Activated CD4-positive, alpha-beta memory T cell treated with anti-CD3 and anti-CD28 coated beads for 36 hours (primary cell): ENCODE measurements at regions of chr6 and their contacts with region 1.

Region 1: DNA sequence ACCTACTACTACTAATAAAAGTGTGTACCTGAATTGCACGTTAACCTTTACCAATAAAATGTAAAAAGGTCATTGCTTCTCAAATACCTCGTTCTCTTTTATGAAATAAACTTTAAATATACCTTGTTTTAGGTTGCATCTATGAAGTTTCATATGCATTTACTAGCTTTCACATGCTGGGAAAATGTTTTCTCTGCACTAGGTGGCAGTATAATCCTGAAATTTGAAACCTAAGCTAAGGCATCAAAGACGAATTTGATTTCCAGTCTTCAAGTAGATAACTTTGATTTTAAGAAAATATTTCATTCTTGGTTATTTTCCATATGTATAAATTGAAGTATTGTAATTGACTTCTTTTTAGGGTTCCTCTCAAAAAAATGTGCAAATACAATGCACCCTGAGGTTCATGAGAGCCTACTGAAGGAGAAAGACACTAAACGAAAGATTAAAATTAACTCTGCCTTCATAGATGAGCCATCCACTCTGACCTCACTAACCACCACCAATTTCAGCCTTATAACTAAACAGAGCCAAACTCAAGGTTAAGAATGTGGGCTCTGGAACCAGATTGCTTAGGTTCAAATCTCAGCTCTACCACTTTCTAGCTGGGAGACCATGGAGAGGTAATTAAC is 7.3 kb upstream of the COL9A1 start:
- DNase-seq: no peak
- H3K4me3 Mint-ChIP-seq: no peak overlapping the region
- H3K27ac Mint-ChIP-seq: no peak overlapping the region
- H3K4me1 Mint-ChIP-seq: peaks cover 2% of the 10 kb centered on the region
- H3K27me3 Mint-ChIP-seq: peaks cover 15% of the 10 kb centered on the region

Region 2: GRCh38 chr6:70221025-70221714 is 89.0 kb before region 1 on chr6:
- CTCF ChIA-PET with region 1: interaction called, 22 read pairs
- POLR2A ChIA-PET with region 1: no interaction called
- intact Hi-C with region 1: loop called (anchors 5 kb)
- DNase-seq: no peak
- H3K4me3 Mint-ChIP-seq: no peak overlapping the region
- H3K27ac Mint-ChIP-seq: no peak overlapping the region
- H3K4me1 Mint-ChIP-seq: peaks cover 2% of the 10 kb centered on the region
- H3K27me3 Mint-ChIP-seq: peaks cover 9% of the 10 kb centered on the region

Region 3: GRCh38 chr6:70327036-70327435 is 16.9 kb after region 1 on chr6:
- CTCF ChIA-PET with region 1: interaction called, 11 read pairs
- POLR2A ChIA-PET with region 1: no interaction called
- intact Hi-C with region 1: no loop called
- DNase-seq: no peak
- H3K4me3 Mint-ChIP-seq: no peak overlapping the region
- H3K27ac Mint-ChIP-seq: no peak overlapping the region
- H3K4me1 Mint-ChIP-seq: no peaks in the 10 kb centered on the region
- H3K27me3 Mint-ChIP-seq: peaks cover 2% of the 10 kb centered on the region

Region 4: DNA sequence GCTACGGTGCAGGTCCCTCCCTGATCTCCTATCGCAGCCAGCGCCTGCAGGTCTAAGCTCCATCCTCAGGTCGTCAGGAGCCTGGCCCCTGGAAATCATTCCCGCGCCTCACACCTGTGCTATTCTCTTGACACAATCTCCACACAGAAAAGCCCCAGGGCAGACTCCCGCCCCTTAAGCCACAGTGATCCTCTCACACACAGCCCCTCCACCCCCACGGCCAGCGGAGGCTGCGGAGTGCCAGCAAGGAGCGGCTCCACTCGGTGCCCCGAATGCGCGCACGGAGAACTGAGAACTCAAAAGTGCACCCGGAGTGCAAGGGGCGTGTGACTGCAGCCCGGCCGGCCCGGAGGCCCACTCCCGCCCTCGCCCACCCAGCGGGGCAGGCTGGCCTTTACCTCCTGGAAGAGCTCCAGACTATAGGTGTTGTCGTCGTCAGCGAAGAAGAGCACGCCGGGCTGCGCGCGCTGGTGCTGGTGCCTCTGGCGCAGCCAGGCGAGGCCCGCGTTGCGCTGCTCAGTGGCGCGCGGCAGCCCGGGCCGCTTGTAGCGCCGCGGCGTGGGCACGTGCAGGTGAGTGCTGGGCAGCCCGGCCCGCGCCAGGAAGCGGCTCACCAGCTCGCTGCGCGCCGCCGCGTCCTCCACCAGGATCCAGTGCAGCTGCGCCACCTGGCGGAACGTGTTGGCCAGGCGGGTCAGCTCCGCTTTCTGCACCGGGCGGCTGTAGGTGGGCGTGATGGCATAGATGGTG is 645.4 kb after region 1 on chr6:
- CTCF ChIA-PET with region 1: interaction called, 24 read pairs
- POLR2A ChIA-PET with region 1: no interaction called
- intact Hi-C with region 1: loop called (anchors 5 kb)
- DNase-seq: peak; percentile 91
- H3K4me3 Mint-ChIP-seq: peak overlapping the region; percentile 70
- H3K27ac Mint-ChIP-seq: no peak overlapping the region
- H3K4me1 Mint-ChIP-seq: peaks cover 11% of the 10 kb centered on the region
- H3K27me3 Mint-ChIP-seq: peaks cover 42% of the 10 kb centered on the region

Region 5: GRCh38 chr6:71012866-71013469 is 702.8 kb after region 1 on chr6:
- CTCF ChIA-PET with region 1: interaction called, 18 read pairs
- POLR2A ChIA-PET with region 1: no interaction called
- intact Hi-C with region 1: loop called (anchors 2 kb)
- DNase-seq: no peak
- H3K4me3 Mint-ChIP-seq: no peak overlapping the region
- H3K27ac Mint-ChIP-seq: no peak overlapping the region
- H3K4me1 Mint-ChIP-seq: no peaks in the 10 kb centered on the region
- H3K27me3 Mint-ChIP-seq: peaks cover 18% of the 10 kb centered on the region